CD14-positive monocyte (primary cell): ENCODE measurements at regions of chr3 and their contacts with region 1.

Region 1: GRCh38 chr3:28334552-28334951 is 14.0 kb upstream of the ZCWPW2 start:
- DNase-seq: no peak
- H3K4me3 ChIP-seq: no peak overlapping the region
- H3K4me3 Mint-ChIP-seq: no peak overlapping the region
- H3K27ac ChIP-seq: no peak overlapping the region
- H3K27ac Mint-ChIP-seq: no peak overlapping the region
- H3K4me1 ChIP-seq: no peaks in the 10 kb centered on the region
- H3K4me1 Mint-ChIP-seq: no peaks in the 10 kb centered on the region
- H3K27me3 ChIP-seq: no peaks in the 10 kb centered on the region
- H3K27me3 Mint-ChIP-seq: no peaks in the 10 kb centered on the region
- CTCF ChIP-seq: peak; percentile 27

Region 2: GRCh38 chr3:27712136-27713077 is 622.1 kb before region 1 on chr3:
- intact Hi-C with region 1: loop called (anchors 5 to 10 kb)
- DNase-seq: peak; percentile 49 to 65 (median 55)
- H3K4me3 ChIP-seq: peak overlapping the region; percentile 52 to 87 (median 57)
- H3K4me3 Mint-ChIP-seq: peak overlapping the region; percentile 97 to 100
- H3K27ac ChIP-seq: no peak overlapping the region
- H3K27ac Mint-ChIP-seq: peak overlapping the region in 3 of 7 donors; percentile 46 to 77 (median 59)
- H3K4me1 ChIP-seq: peaks cover 31 to 34% of the 10 kb centered on the region in 2 donors
- H3K4me1 Mint-ChIP-seq: peaks cover 37% of the 10 kb centered on the region
- H3K27me3 ChIP-seq: peaks cover 65 to 84% of the 10 kb centered on the region in 2 donors
- H3K27me3 Mint-ChIP-seq: peaks cover 71 to 83% (median 77%) of the 10 kb centered on the region in 3 donors
- CTCF ChIP-seq: peak; percentile 84

Region 3: GRCh38 chr3:28376424-28376823 is 41.9 kb after region 1 on chr3:
- intact Hi-C with region 1: no loop called
- DNase-seq: peak; percentile 62 to 78 (median 75)
- H3K4me3 ChIP-seq: peak overlapping the region in 1 of 3 experiments; percentile 19
- H3K4me3 Mint-ChIP-seq: peak overlapping the region; percentile 4 to 71
- H3K27ac ChIP-seq: peak overlapping the region in 1 of 2 donors; percentile 55
- H3K27ac Mint-ChIP-seq: peak overlapping the region; percentile 58 to 82 (median 69)
- H3K4me1 ChIP-seq: peaks cover 0 to 7% of the 10 kb centered on the region in 2 donors
- H3K4me1 Mint-ChIP-seq: peaks cover 14% of the 10 kb centered on the region
- H3K27me3 ChIP-seq: no peaks in the 10 kb centered on the region
- H3K27me3 Mint-ChIP-seq: peaks cover 0 to 2% (median 0%) of the 10 kb centered on the region in 3 donors
- CTCF ChIP-seq: no peak

Region 4: DNA sequence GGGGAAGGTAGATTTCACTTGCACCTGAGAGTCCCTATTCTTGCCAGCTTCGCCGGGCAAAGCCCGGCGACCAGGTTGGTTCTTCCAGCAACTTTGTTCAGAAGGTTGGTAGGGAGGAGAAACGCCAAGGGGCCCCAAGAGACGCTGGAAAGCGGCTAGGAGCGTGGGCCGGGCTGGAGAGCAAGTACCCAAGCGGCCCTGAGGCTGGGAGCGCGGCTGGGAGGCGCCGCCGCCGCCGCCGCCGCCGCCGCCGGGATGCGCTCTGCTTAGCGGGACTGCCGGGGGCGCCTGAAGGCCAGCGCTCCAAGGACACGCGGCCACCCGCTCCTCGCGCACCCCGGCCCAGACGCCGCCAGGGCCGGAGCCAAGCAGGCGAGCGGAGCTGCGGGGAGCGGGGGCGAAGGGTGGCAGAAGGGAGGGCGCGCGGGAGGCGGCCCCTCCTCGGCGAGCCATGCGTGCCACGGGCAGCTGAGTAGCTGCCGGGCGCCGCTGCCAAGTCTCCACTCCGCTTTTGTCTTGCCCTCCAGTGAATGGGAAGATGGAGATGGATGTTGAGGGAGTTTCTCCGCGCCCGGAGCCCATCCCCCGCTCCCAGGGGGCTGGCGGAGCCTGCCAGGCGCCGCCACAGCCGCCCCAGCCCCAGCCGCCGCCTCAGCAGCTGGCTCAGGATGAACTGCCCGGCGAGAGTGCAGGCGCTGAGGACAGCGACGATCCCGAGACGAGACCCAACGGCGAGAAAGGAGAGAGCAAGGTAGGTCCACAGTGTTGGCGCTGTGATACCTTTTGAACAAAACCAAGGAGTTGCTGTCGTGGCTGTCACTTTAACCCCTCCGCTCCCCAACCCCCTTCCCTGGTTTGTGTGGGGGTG is 241.4 kb after region 1 on chr3:
- intact Hi-C with region 1: no loop called
- DNase-seq: no peak
- H3K4me3 ChIP-seq: no peak overlapping the region
- H3K4me3 Mint-ChIP-seq: peak overlapping the region in 1 of 2 donors; percentile 82
- H3K27ac ChIP-seq: no peak overlapping the region
- H3K27ac Mint-ChIP-seq: no peak overlapping the region
- H3K4me1 ChIP-seq: no peaks in the 10 kb centered on the region
- H3K4me1 Mint-ChIP-seq: peaks cover 2% of the 10 kb centered on the region
- H3K27me3 ChIP-seq: peaks cover 38 to 48% of the 10 kb centered on the region in 2 donors
- H3K27me3 Mint-ChIP-seq: peaks cover 41 to 59% (median 50%) of the 10 kb centered on the region in 3 donors
- CTCF ChIP-seq: no peak

Region 5: GRCh38 chr3:28745916-28746617 is 411.5 kb after region 1 on chr3:
- intact Hi-C with region 1: no loop called
- DNase-seq: no peak
- H3K4me3 ChIP-seq: no peak overlapping the region
- H3K4me3 Mint-ChIP-seq: no peak overlapping the region
- H3K27ac ChIP-seq: no peak overlapping the region
- H3K27ac Mint-ChIP-seq: no peak overlapping the region
- H3K4me1 ChIP-seq: no peaks in the 10 kb centered on the region
- H3K4me1 Mint-ChIP-seq: no peaks in the 10 kb centered on the region
- H3K27me3 ChIP-seq: no peaks in the 10 kb centered on the region
- H3K27me3 Mint-ChIP-seq: no peaks in the 10 kb centered on the region
- CTCF ChIP-seq: no peak